ENCODE measurements at regions of chr3 and their contacts with region 1.

Region 1: GRCh38 chr3:4906107-4906621 is 73.1 kb upstream of the BHLHE40 start:
- DNase-seq: no peak
- H3K4me3 Mint-ChIP-seq: peak overlapping the region; percentile 57
- H3K27ac Mint-ChIP-seq: peak overlapping the region; percentile 91
- H3K4me1 Mint-ChIP-seq: peaks cover 93% of the 10 kb centered on the region
- H3K27me3 Mint-ChIP-seq: no peaks in the 10 kb centered on the region

Region 2: DNA sequence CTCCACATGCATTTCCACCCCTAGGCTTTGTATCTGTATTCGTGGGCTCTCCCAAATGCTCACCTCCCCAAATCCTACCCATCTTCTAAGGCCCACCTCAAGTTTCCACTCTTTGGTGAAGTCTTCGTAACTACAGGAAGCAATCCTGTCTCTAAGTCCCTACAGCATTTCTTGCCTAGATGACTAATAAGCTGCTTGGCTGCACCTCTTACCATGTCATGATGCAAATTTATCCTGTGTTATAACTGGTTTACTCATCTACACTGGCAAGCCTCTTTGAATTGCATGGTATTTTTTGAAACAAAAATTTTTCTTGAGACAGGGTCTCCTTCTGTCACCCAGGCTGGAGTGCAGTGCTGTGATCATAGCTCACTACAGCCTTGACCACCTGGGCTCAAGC is 529.7 kb before region 1 on chr3:
- intact Hi-C with region 1: no loop called
- DNase-seq: no peak
- H3K4me3 Mint-ChIP-seq: no peak overlapping the region
- H3K27ac Mint-ChIP-seq: no peak overlapping the region
- H3K4me1 Mint-ChIP-seq: peaks cover 2% of the 10 kb centered on the region
- H3K27me3 Mint-ChIP-seq: no peaks in the 10 kb centered on the region

Region 3: DNA sequence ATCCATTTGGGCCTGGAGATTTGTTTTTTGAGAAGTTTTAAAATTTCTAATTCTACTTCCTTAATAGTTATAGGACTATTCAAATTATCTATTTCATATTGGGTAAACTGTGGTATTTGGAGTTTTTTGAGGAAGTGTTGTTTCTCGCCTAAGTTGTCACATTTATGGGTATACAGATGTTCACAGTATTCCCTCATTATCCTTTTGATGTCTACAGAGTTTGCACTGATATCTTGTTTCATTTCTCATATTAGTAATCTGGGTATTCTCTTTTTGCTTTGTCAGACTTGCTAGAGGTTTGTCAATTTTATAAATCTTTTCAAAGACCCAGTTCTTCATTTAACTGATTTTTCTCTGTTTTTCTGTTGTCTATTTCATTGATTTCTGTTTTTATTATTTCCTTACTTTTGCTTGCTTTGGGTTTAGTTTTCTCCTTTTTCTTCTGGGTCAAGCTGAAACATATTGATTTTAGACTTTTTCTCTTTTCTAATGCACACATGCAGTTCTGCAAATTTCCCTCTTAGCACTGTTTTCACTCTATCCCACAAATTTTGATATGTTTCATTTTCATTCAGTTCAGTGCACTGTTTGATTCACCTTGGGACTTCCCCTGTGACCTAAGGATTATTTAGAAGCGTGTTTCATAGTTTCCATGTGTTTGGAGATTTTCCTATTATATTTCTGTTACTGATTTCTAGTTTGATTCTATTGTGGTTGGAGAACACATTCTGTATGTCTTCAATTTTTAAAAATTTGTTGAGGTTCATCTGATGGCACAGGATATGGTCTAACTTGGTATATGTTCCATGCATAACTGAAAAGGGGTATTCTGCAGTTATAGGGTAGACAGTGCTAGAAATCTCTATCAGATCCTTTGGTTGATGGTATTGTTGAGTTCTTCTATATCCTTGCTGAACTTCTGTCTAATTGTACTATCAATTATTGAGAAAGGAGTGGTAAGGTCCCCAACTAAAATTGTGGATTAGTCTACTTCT is 518.7 kb before region 1 on chr3:
- intact Hi-C with region 1: loop called (anchors 5 kb)
- DNase-seq: no peak
- H3K4me3 Mint-ChIP-seq: no peak overlapping the region
- H3K27ac Mint-ChIP-seq: peak overlapping the region; percentile 87
- H3K4me1 Mint-ChIP-seq: peaks cover 45% of the 10 kb centered on the region
- H3K27me3 Mint-ChIP-seq: no peaks in the 10 kb centered on the region

Region 4: DNA sequence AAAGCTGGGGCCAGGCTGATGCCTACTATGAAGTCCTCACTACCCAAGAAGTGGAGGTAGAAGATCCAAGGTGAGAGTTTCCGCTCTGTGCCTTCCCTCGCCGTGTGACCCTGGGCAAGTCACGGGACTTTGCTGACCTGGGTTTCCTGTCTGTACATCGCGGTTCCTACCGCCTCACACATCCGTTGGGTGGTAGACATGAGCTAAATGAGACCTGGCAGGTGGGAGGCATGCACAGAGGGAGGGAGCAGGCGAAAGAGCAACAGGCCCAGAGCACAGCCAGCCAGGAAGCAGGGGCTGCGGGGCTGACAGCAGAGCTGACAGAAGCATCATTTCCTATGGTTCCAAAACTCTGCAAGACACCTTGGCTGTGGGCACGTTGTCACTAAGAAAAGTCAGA is 84.2 kb before region 1 on chr3:
- intact Hi-C with region 1: loop called (anchors 1 kb)
- DNase-seq: peak; percentile 77
- H3K4me3 Mint-ChIP-seq: peak overlapping the region; percentile 20
- H3K27ac Mint-ChIP-seq: peak overlapping the region; percentile 93
- H3K4me1 Mint-ChIP-seq: peaks cover 84% of the 10 kb centered on the region
- H3K27me3 Mint-ChIP-seq: no peaks in the 10 kb centered on the region

Region 5: GRCh38 chr3:4850928-4851265 is 55.3 kb before region 1 on chr3:
- intact Hi-C with region 1: loop called (anchors 1 kb)
- DNase-seq: no peak
- H3K4me3 Mint-ChIP-seq: peak overlapping the region; percentile 28
- H3K27ac Mint-ChIP-seq: peak overlapping the region; percentile 97
- H3K4me1 Mint-ChIP-seq: peaks cover 81% of the 10 kb centered on the region
- H3K27me3 Mint-ChIP-seq: no peaks in the 10 kb centered on the region

Region 6: GRCh38 chr3:4926892-4927291 is 20.7 kb after region 1 on chr3:
- intact Hi-C with region 1: loop called (anchors 1 kb)
- DNase-seq: no peak
- H3K4me3 Mint-ChIP-seq: no peak overlapping the region
- H3K27ac Mint-ChIP-seq: no peak overlapping the region
- H3K4me1 Mint-ChIP-seq: peaks cover 38% of the 10 kb centered on the region
- H3K27me3 Mint-ChIP-seq: no peaks in the 10 kb centered on the region

Region 7: GRCh38 chr3:5057857-5058324 is 151.7 kb after region 1 on chr3:
- intact Hi-C with region 1: loop called (anchors 5 kb)
- DNase-seq: peak; percentile 65
- H3K4me3 Mint-ChIP-seq: no peak overlapping the region
- H3K27ac Mint-ChIP-seq: peak overlapping the region; percentile 3
- H3K4me1 Mint-ChIP-seq: peaks cover 30% of the 10 kb centered on the region
- H3K27me3 Mint-ChIP-seq: peaks cover 8% of the 10 kb centered on the region